ENCODE measurements at regions of chr4 and their contacts with region 1.

Region 1: DNA sequence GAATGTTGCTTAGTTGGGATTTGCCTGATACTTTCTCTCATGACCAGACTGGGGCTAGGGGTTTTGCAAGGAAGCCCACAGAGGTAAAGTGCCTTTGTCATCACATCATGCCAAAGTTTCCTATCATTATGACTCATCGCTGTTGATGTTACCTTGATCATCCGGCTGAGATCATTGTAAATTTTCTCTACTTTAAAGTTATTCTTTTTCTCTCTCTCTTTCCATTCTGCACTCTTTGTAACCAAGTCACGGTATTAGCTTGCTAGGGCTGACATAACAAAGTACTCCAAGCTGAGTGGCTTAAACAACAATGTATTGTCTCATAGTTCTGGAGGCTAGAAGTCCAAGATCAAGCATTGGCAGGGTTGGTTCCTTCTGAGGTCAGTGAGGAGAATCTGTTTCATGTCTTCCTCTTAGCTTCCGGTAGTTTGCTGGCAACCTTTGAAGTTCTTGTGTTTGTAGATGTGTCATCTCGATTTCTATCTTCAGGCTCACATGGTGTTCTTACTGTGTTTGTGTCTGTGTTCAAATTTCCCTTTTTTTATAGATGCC is 113.0 kb downstream of the DTHD1 start:
- DNase-seq: peak; percentile 60
- H3K4me3 Mint-ChIP-seq: peak overlapping the region; percentile 48
- H3K27ac Mint-ChIP-seq: peak overlapping the region; percentile 94
- H3K4me1 Mint-ChIP-seq: peaks cover 23% of the 10 kb centered on the region
- H3K27me3 Mint-ChIP-seq: peaks cover 2% of the 10 kb centered on the region

Region 2: GRCh38 chr4:35970366-35970960 is 424.0 kb before region 1 on chr4:
- CTCF ChIA-PET with region 1: no interaction called
- POLR2A ChIA-PET with region 1: no interaction called
- intact Hi-C with region 1: loop called (anchors 5 kb)
- DNase-seq: peak; percentile 53
- H3K4me3 Mint-ChIP-seq: no peak overlapping the region
- H3K27ac Mint-ChIP-seq: no peak overlapping the region
- H3K4me1 Mint-ChIP-seq: peaks cover 11% of the 10 kb centered on the region
- H3K27me3 Mint-ChIP-seq: no peaks in the 10 kb centered on the region

Region 3: GRCh38 chr4:36208893-36209473 is 185.4 kb before region 1 on chr4:
- CTCF ChIA-PET with region 1: interaction called, 10 read pairs
- POLR2A ChIA-PET with region 1: no interaction called
- intact Hi-C with region 1: loop called (anchors 2 kb)
- DNase-seq: peak; percentile 54
- H3K4me3 Mint-ChIP-seq: no peak overlapping the region
- H3K27ac Mint-ChIP-seq: peak overlapping the region; percentile 73
- H3K4me1 Mint-ChIP-seq: peaks cover 52% of the 10 kb centered on the region
- H3K27me3 Mint-ChIP-seq: no peaks in the 10 kb centered on the region

Region 4: DNA sequence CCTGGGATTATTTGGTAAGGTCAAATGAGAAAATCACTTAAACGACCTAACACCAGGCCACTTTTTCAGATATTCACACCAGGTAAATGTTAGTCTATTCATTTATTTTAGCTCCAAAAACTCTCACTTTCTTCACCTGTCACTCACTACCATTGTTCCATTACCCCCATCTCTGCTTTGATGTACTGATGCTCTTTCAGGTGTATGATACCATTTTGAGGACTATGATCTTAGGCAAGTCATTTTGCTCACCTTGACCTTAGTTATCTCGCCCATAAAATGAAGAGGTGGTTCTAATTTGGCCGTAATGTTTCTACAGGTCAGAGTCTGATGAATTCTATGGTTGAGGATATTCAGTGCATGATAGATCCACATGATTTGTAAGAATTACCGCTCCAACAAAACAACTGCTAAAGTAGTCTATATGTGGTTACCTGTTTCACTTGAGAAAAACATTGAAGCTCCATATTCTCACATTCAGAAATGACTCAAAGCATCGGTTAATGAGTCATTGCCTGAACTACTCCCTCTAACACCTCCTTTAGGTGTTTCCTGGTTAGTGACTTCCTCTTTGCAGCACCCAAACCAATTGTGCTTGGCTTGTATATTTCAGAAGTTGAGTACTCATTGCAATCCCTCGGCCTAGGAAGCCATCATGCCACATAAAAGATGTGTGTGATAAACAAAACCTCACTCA is 108.5 kb before region 1 on chr4:
- CTCF ChIA-PET with region 1: interaction called, 7 read pairs
- POLR2A ChIA-PET with region 1: interaction called, 7 read pairs
- intact Hi-C with region 1: loop called (anchors 1 kb)
- DNase-seq: peak; percentile 75
- H3K4me3 Mint-ChIP-seq: peak overlapping the region; percentile 53
- H3K27ac Mint-ChIP-seq: peak overlapping the region; percentile 87
- H3K4me1 Mint-ChIP-seq: peaks cover 60% of the 10 kb centered on the region
- H3K27me3 Mint-ChIP-seq: no peaks in the 10 kb centered on the region

Region 5: GRCh38 chr4:36332023-36332781 is 62.2 kb before region 1 on chr4:
- CTCF ChIA-PET with region 1: interaction called, 10 read pairs
- POLR2A ChIA-PET with region 1: interaction called, 3 read pairs
- intact Hi-C with region 1: loop called (anchors 1 kb)
- DNase-seq: peak; percentile 57
- H3K4me3 Mint-ChIP-seq: no peak overlapping the region
- H3K27ac Mint-ChIP-seq: peak overlapping the region; percentile 78
- H3K4me1 Mint-ChIP-seq: peaks cover 23% of the 10 kb centered on the region
- H3K27me3 Mint-ChIP-seq: no peaks in the 10 kb centered on the region

Measured in activated CD4-positive, alpha-beta memory T cell treated with anti-CD3 and anti-CD28 coated beads for 36 hours (primary cell).